ENCODE measurements at regions of chr19 and their contacts with region 1.

Region 1: DNA sequence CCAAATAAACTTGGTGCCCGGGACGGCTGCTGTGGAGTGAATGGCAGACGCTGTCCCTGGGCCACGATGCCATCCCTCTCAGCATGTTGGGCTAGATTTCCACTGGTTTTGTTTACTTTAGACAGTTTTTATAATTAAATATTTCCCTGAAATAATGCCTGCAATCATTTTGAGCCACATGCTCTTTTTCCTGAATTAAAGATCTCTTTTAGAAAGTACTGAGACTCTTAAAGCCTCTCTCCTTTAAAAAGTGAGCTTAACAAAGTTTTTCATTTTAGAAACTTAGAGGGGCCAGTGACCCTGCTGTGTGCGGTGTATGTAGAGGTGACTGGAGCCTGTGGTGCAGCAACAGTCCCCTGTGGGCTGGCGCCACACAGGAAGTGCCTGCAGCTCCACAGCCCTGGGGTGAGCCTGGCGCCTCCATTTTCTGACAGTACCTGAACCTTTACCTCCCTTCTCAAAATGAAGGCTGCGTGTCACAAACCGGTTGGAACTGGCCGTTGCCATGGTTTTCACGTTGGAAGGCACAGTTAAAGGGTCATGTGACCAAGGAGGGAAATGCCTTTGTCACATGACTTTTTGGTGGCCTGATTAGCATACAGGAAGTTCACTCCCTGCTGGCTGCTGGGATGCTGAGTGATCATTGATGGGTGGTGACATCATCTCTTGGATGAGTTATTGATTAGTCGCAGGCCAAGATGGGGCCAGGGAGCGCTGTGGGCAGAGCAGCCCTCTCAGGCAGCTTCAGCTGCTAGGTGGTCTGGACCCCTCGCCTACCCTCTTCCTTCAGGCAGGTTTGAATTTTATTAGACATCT is 26.3 kb downstream of the TSSK6 start:
- DNase-seq: peak; percentile 93 to 99 (median 95)
- H3K4me3 ChIP-seq: peak overlapping the region; percentile 9 to 37
- H3K4me3 Mint-ChIP-seq: peak overlapping the region; percentile 68 to 87 (median 78)
- H3K27ac ChIP-seq: peak overlapping the region; percentile 80
- H3K27ac Mint-ChIP-seq: peak overlapping the region; percentile 98 to 100 (median 100)
- H3K4me1 ChIP-seq: peaks cover 54% of the 10 kb centered on the region
- H3K4me1 Mint-ChIP-seq: peaks cover 29 to 67% (median 47%) of the 10 kb centered on the region in 4 donors
- H3K27me3 ChIP-seq: no peaks in the 10 kb centered on the region
- H3K27me3 Mint-ChIP-seq: no peaks in the 10 kb centered on the region

Region 2: DNA sequence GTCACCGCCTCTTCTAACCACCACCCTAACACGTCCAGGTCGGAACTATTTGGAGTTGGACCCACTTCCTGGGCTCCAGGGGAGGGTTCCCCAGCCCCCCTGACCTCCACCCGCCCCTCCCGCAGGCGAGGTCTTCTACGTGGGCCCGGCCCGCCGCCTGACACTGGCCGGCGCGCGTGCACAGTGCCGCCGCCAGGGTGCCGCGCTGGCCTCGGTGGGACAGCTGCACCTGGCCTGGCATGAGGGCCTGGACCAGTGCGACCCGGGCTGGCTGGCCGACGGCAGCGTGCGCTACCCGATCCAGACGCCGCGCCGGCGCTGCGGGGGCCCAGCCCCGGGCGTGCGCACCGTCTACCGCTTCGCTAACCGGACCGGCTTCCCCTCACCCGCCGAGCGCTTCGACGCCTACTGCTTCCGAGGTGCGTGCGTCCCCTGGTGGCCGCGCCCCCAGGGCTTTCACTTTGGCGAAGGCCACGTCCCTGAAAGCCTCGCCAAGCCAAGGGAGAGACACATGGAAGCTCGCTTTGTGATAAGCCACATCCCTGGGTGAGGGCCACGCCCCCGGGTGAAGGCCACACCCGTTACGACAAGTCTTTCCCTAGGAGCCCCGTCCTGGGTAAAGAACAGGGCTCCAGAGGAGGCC is 264.1 kb before region 1 on chr19:
- CTCF ChIA-PET with region 1: interaction called, 10 read pairs
- POLR2A ChIA-PET with region 1: no interaction called
- intact Hi-C with region 1: no loop called
- DNase-seq: peak; percentile 74 to 78 (median 76)
- H3K4me3 ChIP-seq: peak overlapping the region in 1 of 2 donors; percentile 49
- H3K4me3 Mint-ChIP-seq: peak overlapping the region; percentile 70 to 93 (median 76)
- H3K27ac ChIP-seq: no peak overlapping the region
- H3K27ac Mint-ChIP-seq: peak overlapping the region in 2 of 7 donors; percentile 10 to 70
- H3K4me1 ChIP-seq: peaks cover 10% of the 10 kb centered on the region
- H3K4me1 Mint-ChIP-seq: peaks cover 0 to 5% (median 2%) of the 10 kb centered on the region in 4 donors
- H3K27me3 ChIP-seq: no peaks in the 10 kb centered on the region
- H3K27me3 Mint-ChIP-seq: peaks cover 8 to 10% of the 10 kb centered on the region in 2 donors

Region 3: GRCh38 chr19:19361075-19361594 is 127.9 kb before region 1 on chr19:
- CTCF ChIA-PET with region 1: interaction called, 287 read pairs
- POLR2A ChIA-PET with region 1: interaction called, 134 read pairs
- intact Hi-C with region 1: no loop called
- DNase-seq: peak; percentile 57 to 77 (median 65)
- H3K4me3 ChIP-seq: peak overlapping the region in 1 of 2 donors; percentile 24
- H3K4me3 Mint-ChIP-seq: peak overlapping the region in 6 of 8 donors; percentile 34 to 66 (median 52)
- H3K27ac ChIP-seq: no peak overlapping the region
- H3K27ac Mint-ChIP-seq: peak overlapping the region; percentile 25 to 88 (median 82)
- H3K4me1 ChIP-seq: peaks cover 35% of the 10 kb centered on the region
- H3K4me1 Mint-ChIP-seq: peaks cover 24 to 47% (median 35%) of the 10 kb centered on the region in 4 donors
- H3K27me3 ChIP-seq: no peaks in the 10 kb centered on the region
- H3K27me3 Mint-ChIP-seq: no peaks in the 10 kb centered on the region

Region 4: DNA sequence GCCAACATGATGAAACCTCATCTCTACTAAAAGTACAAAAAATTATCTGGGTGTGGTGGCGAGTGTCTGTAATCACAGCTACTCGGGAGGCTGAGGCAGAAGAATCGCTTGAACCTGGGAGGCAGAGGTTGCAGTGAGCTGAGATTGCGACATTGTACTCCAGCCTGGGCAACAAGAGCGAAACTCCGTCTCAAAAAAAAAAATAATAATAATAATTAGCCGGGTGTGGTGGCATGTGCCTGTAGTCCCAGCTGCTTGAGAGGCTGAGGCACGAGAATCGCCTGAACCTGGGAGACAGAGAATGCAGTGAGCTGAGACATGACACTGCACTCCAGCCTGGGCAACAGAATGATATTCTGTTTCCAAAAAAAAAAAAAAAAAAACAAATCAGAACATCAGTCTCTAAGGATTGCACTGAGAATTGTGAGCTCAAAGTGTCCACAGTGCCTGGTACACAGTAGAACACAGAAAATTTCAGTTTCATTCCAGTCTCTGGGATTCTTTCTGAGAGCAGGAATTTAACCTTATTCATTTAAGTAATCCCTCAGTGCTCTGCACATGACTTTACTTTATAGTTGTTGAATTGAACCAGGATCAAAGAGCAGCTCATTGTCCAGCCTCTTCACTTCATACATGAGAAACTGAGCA is 109.7 kb before region 1 on chr19:
- CTCF ChIA-PET with region 1: interaction called, 16 read pairs
- POLR2A ChIA-PET with region 1: interaction called, 31 read pairs
- intact Hi-C with region 1: no loop called
- DNase-seq: no peak
- H3K4me3 ChIP-seq: no peak overlapping the region
- H3K4me3 Mint-ChIP-seq: no peak overlapping the region
- H3K27ac ChIP-seq: no peak overlapping the region
- H3K27ac Mint-ChIP-seq: no peak overlapping the region
- H3K4me1 ChIP-seq: peaks cover 2% of the 10 kb centered on the region
- H3K4me1 Mint-ChIP-seq: peaks cover 0 to 3% (median 0%) of the 10 kb centered on the region in 4 donors
- H3K27me3 ChIP-seq: no peaks in the 10 kb centered on the region
- H3K27me3 Mint-ChIP-seq: no peaks in the 10 kb centered on the region

Region 5: GRCh38 chr19:19410275-19411192 is 78.5 kb before region 1 on chr19:
- CTCF ChIA-PET with region 1: interaction called, 73 read pairs
- POLR2A ChIA-PET with region 1: interaction called, 85 read pairs
- intact Hi-C with region 1: loop called (anchors 1 kb)
- DNase-seq: peak in 1 of 5 donors; percentile 47
- H3K4me3 ChIP-seq: no peak overlapping the region
- H3K4me3 Mint-ChIP-seq: peak overlapping the region in 7 of 8 donors; percentile 9 to 63 (median 49)
- H3K27ac ChIP-seq: no peak overlapping the region
- H3K27ac Mint-ChIP-seq: peak overlapping the region; percentile 55 to 96 (median 80)
- H3K4me1 ChIP-seq: peaks cover 73% of the 10 kb centered on the region
- H3K4me1 Mint-ChIP-seq: peaks cover 55 to 77% (median 68%) of the 10 kb centered on the region in 4 donors
- H3K27me3 ChIP-seq: no peaks in the 10 kb centered on the region
- H3K27me3 Mint-ChIP-seq: no peaks in the 10 kb centered on the region

Region 6: DNA sequence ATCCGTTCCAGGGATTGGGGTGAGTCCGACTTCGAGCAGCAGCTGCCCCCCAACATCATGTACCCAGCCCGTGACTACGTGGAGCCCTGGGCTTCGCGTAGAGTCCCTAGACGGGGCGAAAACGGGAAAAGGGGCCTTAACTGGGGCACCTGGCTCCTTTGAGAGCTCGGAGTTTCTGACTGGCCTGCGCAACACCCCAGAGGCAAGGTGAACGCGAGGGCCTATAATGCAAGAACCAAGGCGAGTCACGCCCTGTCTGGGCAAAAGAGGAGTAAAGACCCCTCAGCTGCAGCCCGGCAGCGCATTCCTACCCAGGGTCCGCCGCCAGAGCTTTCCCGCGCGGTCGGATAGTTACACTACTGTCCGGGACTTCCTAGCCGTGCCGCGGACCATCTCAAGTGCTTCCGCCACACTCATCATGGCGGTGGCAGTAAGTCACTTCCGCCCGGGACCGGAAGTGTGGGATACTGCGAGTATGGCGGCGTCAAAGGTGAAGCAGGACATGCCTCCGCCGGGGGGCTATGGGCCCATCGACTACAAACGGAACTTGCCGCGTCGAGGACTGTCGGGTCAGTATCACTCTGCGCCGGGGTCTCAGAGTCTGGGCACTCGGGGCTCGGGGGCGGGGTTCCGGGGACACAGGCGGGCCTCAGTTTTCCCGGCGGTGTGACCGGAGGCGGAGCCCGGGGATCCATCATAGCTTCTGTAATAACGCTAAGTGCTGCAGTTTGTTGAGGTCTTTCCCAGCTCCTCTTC is 26.9 kb after region 1 on chr19 and contains the start of gene NDUFA13:
- CTCF ChIA-PET with region 1: interaction called, 11 read pairs
- POLR2A ChIA-PET with region 1: interaction called, 22 read pairs
- intact Hi-C with region 1: loop called (anchors 1 kb)
- DNase-seq: peak; percentile 91 to 95 (median 92)
- H3K4me3 ChIP-seq: peak within 1 kb of the TSS; percentile 88 to 90
- H3K4me3 Mint-ChIP-seq: peak within 1 kb of the TSS; percentile 93 to 99 (median 97)
- H3K27ac ChIP-seq: peak within 1 kb of the TSS; percentile 92
- H3K27ac Mint-ChIP-seq: peak within 1 kb of the TSS; percentile 94 to 98 (median 97)
- H3K4me1 ChIP-seq: peaks cover 35% of the 10 kb centered on the region
- H3K4me1 Mint-ChIP-seq: peaks cover 16 to 47% (median 29%) of the 10 kb centered on the region in 4 donors
- H3K27me3 ChIP-seq: no peaks in the 10 kb centered on the region
- H3K27me3 Mint-ChIP-seq: no peaks in the 10 kb centered on the region
- total RNA-seq, gene NDUFA13: 191 to 199 TPM

Measured in CD4-positive, alpha-beta memory T cell (primary cell).